ENCODE measurements at regions of chr2 and their contacts with region 1.

Region 1: GRCh38 chr2:238256594-238257104 is 16.8 kb upstream of the HES6 start:
- H3K4me3 ChIP-seq: no peak overlapping the region
- H3K27ac ChIP-seq: no peak overlapping the region
- H3K4me1 ChIP-seq: no peaks in the 10 kb centered on the region
- CTCF ChIP-seq: peak; percentile 84

Region 2: DNA sequence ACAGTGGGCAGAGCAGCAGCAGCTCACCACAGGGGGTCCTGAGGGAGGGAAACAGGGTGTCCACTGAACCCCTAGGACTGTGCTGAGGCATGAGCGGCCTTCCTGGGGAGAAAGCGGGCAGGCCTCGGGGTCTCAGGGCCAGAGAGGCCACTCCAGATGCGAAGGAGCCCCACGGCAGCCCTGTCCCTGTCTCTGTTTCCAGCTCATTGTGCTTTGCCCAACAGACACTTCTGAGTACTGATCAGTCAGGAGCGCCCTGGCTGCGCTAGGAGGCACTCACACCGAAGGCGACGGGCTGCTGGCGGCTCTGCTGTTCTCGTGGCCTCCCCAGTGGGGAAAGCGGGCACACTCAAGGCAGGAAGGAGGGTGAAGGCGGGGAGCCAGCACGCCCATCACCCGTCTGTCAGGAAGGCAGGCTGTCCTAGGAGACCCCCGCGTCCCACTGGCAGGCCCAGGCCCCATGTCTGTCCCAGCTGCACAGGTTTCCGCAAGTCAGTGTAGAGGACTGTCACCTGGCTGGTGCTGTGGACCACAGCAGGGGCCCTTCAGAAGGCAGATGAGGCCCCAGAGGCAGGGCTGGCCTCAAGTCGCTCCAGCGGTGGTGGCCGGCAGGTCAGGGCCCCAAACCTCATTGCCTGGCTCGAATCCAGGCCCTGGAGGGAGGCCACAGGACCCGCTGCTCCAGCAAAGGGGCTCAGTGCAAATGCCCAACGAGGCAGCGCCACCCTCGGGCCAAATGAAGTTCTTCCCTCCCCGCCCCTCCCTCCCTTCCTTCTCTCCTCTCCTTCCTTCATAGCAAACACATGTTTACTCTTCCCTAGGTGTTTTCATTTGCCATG is 149.7 kb before region 1 on chr2:
- CTCF ChIA-PET with region 1: no interaction called
- POLR2A ChIA-PET with region 1: no interaction called
- H3K4me3 ChIP-seq: no peak overlapping the region
- H3K27ac ChIP-seq: no peak overlapping the region
- H3K4me1 ChIP-seq: no peaks in the 10 kb centered on the region
- CTCF ChIP-seq: no peak

Region 3: DNA sequence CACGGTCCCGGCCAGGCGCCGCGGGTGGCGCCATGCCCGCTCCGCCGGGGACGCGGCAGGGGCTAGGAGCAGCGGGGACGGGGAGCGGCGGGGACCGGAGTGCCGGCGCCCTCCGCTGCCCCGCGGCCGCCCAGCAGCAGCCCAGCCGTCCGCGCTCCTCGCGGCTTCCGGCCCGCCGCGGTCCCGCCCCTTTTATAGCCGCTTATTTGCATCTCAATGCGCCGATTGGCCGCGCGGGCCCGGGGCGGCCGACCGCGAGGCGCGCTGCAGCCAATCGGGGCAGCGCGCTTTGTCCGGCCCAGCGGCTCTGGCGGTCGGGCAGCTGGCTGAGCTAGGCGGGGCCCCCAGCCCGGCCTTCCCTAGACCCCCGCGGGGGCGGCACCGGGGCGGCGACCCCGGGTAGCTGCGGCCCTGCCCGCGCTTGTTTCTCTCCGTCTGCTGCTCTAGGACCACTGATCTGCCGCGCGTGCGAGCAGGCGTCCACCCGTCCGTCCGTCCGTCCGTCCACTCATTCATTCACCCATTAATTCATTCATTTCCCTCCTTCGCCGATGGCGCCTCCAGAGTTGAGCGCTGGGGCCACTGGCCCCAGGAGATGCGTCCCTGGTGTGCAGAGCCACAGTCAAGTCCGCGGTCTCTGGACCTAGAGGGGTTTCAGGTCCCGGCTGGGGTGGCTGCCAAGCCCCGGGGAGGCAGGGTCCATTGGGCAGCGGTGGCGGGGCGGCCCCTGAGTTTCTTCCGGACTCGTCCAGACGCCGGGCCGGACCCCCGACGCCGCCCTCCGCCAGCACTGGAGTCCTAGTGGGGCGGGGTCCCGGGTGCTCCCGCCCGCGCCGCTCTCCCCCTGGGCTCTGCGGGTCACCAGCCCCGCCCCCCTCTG is 16.5 kb before region 1 on chr2 and contains the start of gene HES6:
- CTCF ChIA-PET with region 1: interaction called, 22 read pairs
- POLR2A ChIA-PET with region 1: interaction called, 7 read pairs
- H3K4me3 ChIP-seq: peak within 1 kb of the TSS; percentile 66
- H3K27ac ChIP-seq: peak within 1 kb of the TSS; percentile 74; the same call in 1 of the 2 replicates
- H3K4me1 ChIP-seq: peaks cover 8% of the 10 kb centered on the region
- CTCF ChIP-seq: no peak